Pancreas (tissue), 10 donors: ENCODE measurements at regions of chr3 and their contacts with region 1.

Region 1: GRCh38 chr3:39288300-39288808 is 8.5 kb upstream of the CX3CR1 start:
- DNase-seq: peak; percentile 72 to 88 (median 78)
- ATAC-seq: peak; percentile 82 to 95 (median 92)
- H3K4me3 ChIP-seq: no peak overlapping the region
- H3K27ac ChIP-seq: no peak overlapping the region
- H3K4me1 ChIP-seq: peaks cover 4 to 9% (median 4%) of the 10 kb centered on the region in 3 donors
- H3K27me3 ChIP-seq: no peaks in the 10 kb centered on the region
- CTCF ChIP-seq: peak; percentile 54 to 90 (median 83)

Region 2: GRCh38 chr3:39126532-39127071 is 161.8 kb before region 1 on chr3:
- intact Hi-C with region 1: loop called (anchors 5 to 10 kb)
- DNase-seq: peak in 3 of 6 donors; percentile 32 to 58 (median 54)
- ATAC-seq: peak; percentile 49 to 79 (median 77)
- H3K4me3 ChIP-seq: no peak overlapping the region
- H3K27ac ChIP-seq: peak overlapping the region in 1 of 4 donors; percentile 34
- H3K4me1 ChIP-seq: peaks cover 4 to 13% (median 5%) of the 10 kb centered on the region in 3 donors
- H3K27me3 ChIP-seq: no peaks in the 10 kb centered on the region
- CTCF ChIP-seq: peak in 3 of 4 donors; percentile 25 to 35 (median 32)

Region 3: GRCh38 chr3:39189959-39190269 is 98.4 kb before region 1 on chr3:
- intact Hi-C with region 1: loop called in 2 of 3 experiments (anchors 5 kb)
- DNase-seq: peak in 4 of 6 donors; percentile 73 to 88 (median 78)
- ATAC-seq: peak; percentile 89 to 97 (median 94)
- H3K4me3 ChIP-seq: no peak overlapping the region
- H3K27ac ChIP-seq: peak overlapping the region in 1 of 4 donors; percentile 15
- H3K4me1 ChIP-seq: peaks cover 0 to 4% (median 0%) of the 10 kb centered on the region in 3 donors
- H3K27me3 ChIP-seq: no peaks in the 10 kb centered on the region
- CTCF ChIP-seq: peak; percentile 64 to 78 (median 73)

Region 4: GRCh38 chr3:39750712-39751111 is 462.4 kb after region 1 on chr3:
- intact Hi-C with region 1: no loop called
- DNase-seq: no peak
- ATAC-seq: no peak
- H3K4me3 ChIP-seq: no peak overlapping the region
- H3K27ac ChIP-seq: no peak overlapping the region
- H3K4me1 ChIP-seq: peaks cover 0 to 17% (median 15%) of the 10 kb centered on the region in 3 donors
- H3K27me3 ChIP-seq: no peaks in the 10 kb centered on the region
- CTCF ChIP-seq: no peak